ENCODE measurements at regions of chr4 and their contacts with region 1.

Region 1: GRCh38 chr4:152454398-152455011 is 81.4 kb downstream of the FBXW7 start:
- DNase-seq: no peak
- H3K4me3 ChIP-seq: no peak overlapping the region
- H3K27ac ChIP-seq: no peak overlapping the region
- H3K4me1 ChIP-seq: no peaks in the 10 kb centered on the region
- H3K27me3 ChIP-seq: no peaks in the 10 kb centered on the region
- CTCF ChIP-seq: peak in 1 of 3 experiments; percentile 26
- POLR2A ChIP-seq: no peak

Region 2: DNA sequence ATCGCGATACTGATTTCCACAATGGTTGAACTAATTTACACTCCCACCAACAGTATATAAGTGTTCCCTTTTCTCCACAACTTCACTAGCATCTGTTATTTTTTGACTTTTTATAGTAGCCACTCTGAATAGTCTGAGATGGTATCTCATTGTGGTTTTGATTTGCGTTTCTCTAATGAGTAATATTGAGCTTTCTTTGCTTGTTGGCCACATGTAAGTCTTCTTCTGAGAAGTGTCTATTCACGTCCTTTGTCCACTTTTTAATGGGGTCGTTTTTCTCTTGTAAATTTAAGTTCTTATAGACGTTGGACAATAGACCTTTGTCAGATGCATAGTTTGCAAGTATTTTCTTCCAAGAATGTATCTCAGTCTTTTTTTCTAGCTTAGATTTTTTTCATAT is 71.4 kb after region 1 on chr4:
- intact Hi-C with region 1: no loop called
- DNase-seq: no peak
- H3K4me3 ChIP-seq: no peak overlapping the region
- H3K27ac ChIP-seq: no peak overlapping the region
- H3K4me1 ChIP-seq: peaks cover 7% of the 10 kb centered on the region
- H3K27me3 ChIP-seq: no peaks in the 10 kb centered on the region
- CTCF ChIP-seq: no peak
- POLR2A ChIP-seq: no peak

Region 3: DNA sequence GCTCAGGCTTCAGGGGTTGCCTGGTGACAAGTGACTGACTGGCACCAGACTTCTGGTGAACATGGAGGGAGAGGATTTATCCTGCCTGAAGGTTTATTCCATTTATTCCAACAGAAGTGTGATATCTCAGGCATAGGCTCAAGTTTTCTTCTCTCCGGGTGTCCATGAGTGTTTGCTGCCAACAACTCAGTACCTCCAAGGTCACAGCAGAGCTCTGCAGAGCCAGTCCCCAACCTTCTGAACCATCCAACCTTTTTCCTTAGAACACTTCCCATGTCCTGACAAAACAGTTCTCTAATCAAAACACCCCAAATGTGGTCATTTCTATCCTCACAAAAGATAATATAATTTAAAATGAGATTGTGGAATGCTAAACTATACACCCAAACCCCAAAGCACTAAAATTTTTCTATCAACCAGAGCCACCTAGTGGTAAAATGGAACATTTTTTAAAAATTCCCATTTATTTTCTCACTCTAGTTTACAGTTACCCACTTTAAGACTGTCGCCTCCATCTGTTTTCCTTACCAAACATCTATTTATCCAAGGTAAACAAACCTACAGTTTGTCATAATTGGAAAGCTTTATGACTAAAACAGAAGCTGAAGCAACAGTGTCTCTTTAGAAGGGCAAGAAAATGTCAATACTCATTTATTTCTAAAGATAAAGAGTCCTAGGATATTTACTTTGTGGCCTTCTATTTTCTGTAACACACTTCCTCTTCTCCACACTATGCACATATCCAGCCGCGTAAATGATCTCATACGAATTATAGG is 185.7 kb after region 1 on chr4:
- intact Hi-C with region 1: loop called (anchors 2 kb)
- DNase-seq: no peak
- H3K4me3 ChIP-seq: no peak overlapping the region
- H3K27ac ChIP-seq: no peak overlapping the region
- H3K4me1 ChIP-seq: no peaks in the 10 kb centered on the region
- H3K27me3 ChIP-seq: no peaks in the 10 kb centered on the region
- CTCF ChIP-seq: peak; percentile 17 to 55 (median 44)
- POLR2A ChIP-seq: no peak

Measured in vagina (tissue), 2 donors.